ENCODE measurements at regions of chr13 and their contacts with region 1.

Region 1: DNA sequence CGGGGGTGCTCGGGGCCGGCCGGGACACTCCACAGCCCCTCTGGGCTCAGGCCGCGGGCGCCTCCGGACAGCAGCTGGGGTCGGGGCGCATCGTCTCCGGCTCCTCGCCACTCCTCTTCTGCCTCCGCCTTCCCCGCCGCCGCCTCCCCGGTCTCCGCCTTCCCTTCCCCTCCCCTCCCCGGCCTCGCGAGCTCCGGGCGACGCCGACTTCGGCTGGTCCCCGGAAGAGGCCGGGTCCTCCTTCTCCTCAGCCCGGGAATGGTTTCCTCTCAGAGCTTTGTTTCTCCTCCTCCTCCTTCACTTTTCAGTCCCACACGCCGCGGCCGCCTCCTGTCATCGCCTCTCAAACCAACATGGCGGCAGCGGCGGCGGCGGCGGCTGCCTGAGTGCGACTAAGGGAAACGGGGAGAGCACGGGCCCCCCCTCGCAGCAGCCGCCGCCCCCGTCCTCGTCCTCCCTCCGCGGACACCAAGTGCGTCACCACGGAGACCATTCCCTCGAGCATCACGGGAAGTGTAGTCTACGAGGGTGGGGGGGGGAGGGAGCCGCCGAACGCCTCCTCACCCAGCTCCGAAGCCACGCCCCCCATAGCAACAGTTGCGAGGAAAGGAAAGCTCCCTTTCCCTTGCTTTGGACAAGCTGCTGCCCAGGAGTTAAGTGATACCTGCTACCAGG is at the start of gene UBL3:
- DNase-seq: peak; percentile 97 to 98 (median 98)
- ATAC-seq: peak; percentile 98
- H3K4me3 ChIP-seq: peak within 1 kb of the TSS; percentile 88
- H3K27ac ChIP-seq: peak within 1 kb of the TSS; percentile 98
- H3K4me1 ChIP-seq: no peaks in the 10 kb centered on the region
- H3K27me3 ChIP-seq: no peaks in the 10 kb centered on the region
- total RNA-seq, gene UBL3: 23.5 to 25.8 (median 24.9) TPM

Region 2: GRCh38 chr13:29791997-29792780 is 58.2 kb before region 1 on chr13:
- intact Hi-C with region 1: loop called in 1 of 4 experiments (anchors 10 kb)
- DNase-seq: no peak
- ATAC-seq: no peak
- H3K4me3 ChIP-seq: no peak overlapping the region
- H3K27ac ChIP-seq: no peak overlapping the region
- H3K4me1 ChIP-seq: no peaks in the 10 kb centered on the region
- H3K27me3 ChIP-seq: no peaks in the 10 kb centered on the region